CD8-positive, alpha-beta T cell (primary cell): ENCODE measurements at regions of chr11 and their contacts with region 1.

Region 1: DNA sequence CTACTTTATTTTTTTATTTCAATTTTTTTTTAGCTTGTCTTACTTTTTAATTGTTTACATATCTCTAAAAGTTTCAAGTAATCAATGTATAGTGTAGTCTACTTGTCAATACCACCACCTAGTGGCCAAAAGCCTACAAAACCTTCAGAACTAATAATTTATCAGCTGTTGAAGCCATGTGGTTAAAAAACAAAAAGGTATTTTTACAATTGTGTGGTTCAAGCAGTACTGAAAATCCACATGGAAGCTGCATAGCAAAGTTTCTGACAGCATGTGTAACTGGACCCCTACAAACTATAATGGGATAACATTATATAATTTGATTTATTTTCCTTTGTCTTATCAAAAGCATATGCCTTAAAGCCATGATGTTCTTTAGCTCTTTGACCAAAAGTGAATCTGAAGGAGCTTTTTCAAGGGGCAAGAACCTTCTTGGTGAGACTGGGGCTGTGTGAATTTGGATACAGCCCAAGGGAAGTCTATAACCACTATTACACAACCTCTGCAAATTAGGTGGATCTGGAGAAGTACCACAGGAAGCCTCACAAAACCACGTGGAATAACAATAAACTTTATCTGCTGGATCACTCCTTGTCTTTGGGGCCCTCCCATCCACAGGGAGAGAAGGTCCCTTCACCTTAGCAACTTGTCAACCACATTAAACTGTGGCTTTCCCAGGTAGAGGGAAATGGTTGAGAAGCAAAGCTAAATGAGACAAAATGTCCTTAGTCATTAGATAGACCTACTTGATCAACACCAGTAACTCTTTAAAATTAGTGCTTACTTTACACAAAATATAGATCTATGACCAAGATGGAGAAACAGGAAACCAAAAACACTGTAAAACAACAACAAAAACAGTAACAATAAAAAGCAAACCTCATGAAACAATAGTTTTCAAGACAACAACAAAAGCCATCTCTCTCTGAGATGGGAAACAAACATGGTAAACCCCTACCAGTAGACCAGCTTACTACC is 9.9 kb downstream of the NARS2 start:
- DNase-seq: peak in 7 of 9 experiments; percentile 3 to 76 (median 35)
- ATAC-seq: peak; percentile 65
- H3K4me3 ChIP-seq: no peak overlapping the region
- H3K4me3 Mint-ChIP-seq: no peak overlapping the region
- H3K27ac ChIP-seq: no peak overlapping the region
- H3K27ac Mint-ChIP-seq: peak overlapping the region; percentile 16
- H3K4me1 ChIP-seq: peaks cover 13% of the 10 kb centered on the region
- H3K4me1 Mint-ChIP-seq: peaks cover 35% of the 10 kb centered on the region
- H3K27me3 ChIP-seq: no peaks in the 10 kb centered on the region
- H3K27me3 Mint-ChIP-seq: no peaks in the 10 kb centered on the region
- CTCF ChIP-seq: peak; percentile 81

Region 2: GRCh38 chr11:77322506-77322905 is 1242.3 kb before region 1 on chr11:
- CTCF ChIA-PET with region 1: no interaction called
- POLR2A ChIA-PET with region 1: no interaction called
- intact Hi-C with region 1: no loop called
- DNase-seq: no peak
- ATAC-seq: no peak
- H3K4me3 ChIP-seq: no peak overlapping the region
- H3K4me3 Mint-ChIP-seq: no peak overlapping the region
- H3K27ac ChIP-seq: no peak overlapping the region
- H3K27ac Mint-ChIP-seq: no peak overlapping the region
- H3K4me1 ChIP-seq: no peaks in the 10 kb centered on the region
- H3K4me1 Mint-ChIP-seq: no peaks in the 10 kb centered on the region
- H3K27me3 ChIP-seq: no peaks in the 10 kb centered on the region
- H3K27me3 Mint-ChIP-seq: no peaks in the 10 kb centered on the region
- CTCF ChIP-seq: no peak

Region 3: GRCh38 chr11:78045851-78046485 is 518.8 kb before region 1 on chr11:
- CTCF ChIA-PET with region 1: interaction called, 5 read pairs
- POLR2A ChIA-PET with region 1: no interaction called
- intact Hi-C with region 1: loop called in 1 of 2 experiments (anchors 2 kb)
- DNase-seq: peak; percentile 58 to 90 (median 78)
- ATAC-seq: peak; percentile 95
- H3K4me3 ChIP-seq: peak overlapping the region; percentile 15 to 48
- H3K4me3 Mint-ChIP-seq: peak overlapping the region; percentile 63
- H3K27ac ChIP-seq: no peak overlapping the region
- H3K27ac Mint-ChIP-seq: no peak overlapping the region
- H3K4me1 ChIP-seq: peaks cover 5% of the 10 kb centered on the region
- H3K4me1 Mint-ChIP-seq: peaks cover 13% of the 10 kb centered on the region
- H3K27me3 ChIP-seq: no peaks in the 10 kb centered on the region
- H3K27me3 Mint-ChIP-seq: no peaks in the 10 kb centered on the region
- CTCF ChIP-seq: peak; percentile 97

Region 4: DNA sequence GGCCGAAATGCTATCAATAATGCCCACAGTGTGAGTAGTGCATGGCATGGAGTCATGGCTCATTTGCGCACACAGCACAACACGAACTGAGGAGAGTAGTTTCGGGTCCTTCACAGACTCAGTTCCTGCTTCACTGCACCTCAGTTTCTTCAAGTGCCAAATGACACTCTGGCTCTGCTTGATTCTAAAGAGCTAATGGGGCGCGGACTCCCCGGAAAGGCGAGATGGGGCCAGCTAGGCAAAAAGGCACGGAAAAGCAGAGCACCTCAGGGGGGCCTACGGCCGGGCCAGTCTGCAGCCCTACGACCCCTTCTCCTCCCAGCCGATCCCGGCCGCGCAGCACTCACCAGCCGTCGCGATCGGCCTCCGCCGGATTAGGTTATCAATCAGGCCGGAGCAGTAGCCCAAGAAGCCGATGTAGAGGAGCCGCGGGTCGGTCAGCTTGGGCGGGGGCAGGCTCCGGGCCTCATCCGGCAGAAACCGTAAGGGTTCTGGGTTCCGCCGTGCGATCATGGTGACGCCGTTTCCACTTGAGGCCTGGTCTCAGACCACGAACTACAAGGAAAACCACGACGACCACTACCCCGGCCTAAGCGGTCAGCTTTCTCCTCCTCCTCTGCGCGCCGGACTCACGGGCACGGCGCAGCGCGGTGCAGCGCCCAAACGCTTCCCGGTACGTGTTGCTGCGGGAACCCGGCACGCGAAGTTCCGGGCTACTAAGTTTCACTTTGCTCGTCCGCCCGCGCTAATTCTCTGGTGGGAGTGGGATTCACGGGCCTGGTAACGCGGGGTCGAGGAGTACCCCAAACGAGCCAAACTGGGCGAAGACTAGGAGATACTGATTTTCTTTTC is 485.3 kb before region 1 on chr11 and contains the start of gene NDUFC2:
- CTCF ChIA-PET with region 1: interaction called, 5 read pairs
- POLR2A ChIA-PET with region 1: interaction called, 3 read pairs
- intact Hi-C with region 1: loop called in 1 of 2 experiments (anchors 10 kb)
- DNase-seq: peak; percentile 30 to 83 (median 66)
- ATAC-seq: peak; percentile 82
- H3K4me3 ChIP-seq: peak within 1 kb of the TSS; percentile 74 to 97
- H3K4me3 Mint-ChIP-seq: peak within 1 kb of the TSS; percentile 96
- H3K27ac ChIP-seq: peak within 1 kb of the TSS; percentile 76 to 78
- H3K27ac Mint-ChIP-seq: peak within 1 kb of the TSS; percentile 96
- H3K4me1 ChIP-seq: peaks cover 56% of the 10 kb centered on the region
- H3K4me1 Mint-ChIP-seq: peaks cover 63% of the 10 kb centered on the region
- H3K27me3 ChIP-seq: no peaks in the 10 kb centered on the region
- H3K27me3 Mint-ChIP-seq: no peaks in the 10 kb centered on the region
- CTCF ChIP-seq: no peak
- total RNA-seq, gene NDUFC2: 72.2 to 76.3 TPM

Region 5: GRCh38 chr11:78228467-78228866 is 336.3 kb before region 1 on chr11:
- CTCF ChIA-PET with region 1: interaction called, 8 read pairs
- POLR2A ChIA-PET with region 1: no interaction called
- intact Hi-C with region 1: loop called (anchors 1 to 2 kb)
- DNase-seq: peak in 3 of 9 experiments; percentile 28 to 50 (median 38)
- ATAC-seq: no peak
- H3K4me3 ChIP-seq: no peak overlapping the region
- H3K4me3 Mint-ChIP-seq: no peak overlapping the region
- H3K27ac ChIP-seq: no peak overlapping the region
- H3K27ac Mint-ChIP-seq: no peak overlapping the region
- H3K4me1 ChIP-seq: no peaks in the 10 kb centered on the region
- H3K4me1 Mint-ChIP-seq: peaks cover 4% of the 10 kb centered on the region
- H3K27me3 ChIP-seq: no peaks in the 10 kb centered on the region
- H3K27me3 Mint-ChIP-seq: no peaks in the 10 kb centered on the region
- CTCF ChIP-seq: no peak